Activated CD8-positive, alpha-beta T cell treated with anti-CD3 and anti-CD28 coated beads for 36 hours (primary cell): ENCODE measurements at regions of chr12 and their contacts with region 1.

Region 1: DNA sequence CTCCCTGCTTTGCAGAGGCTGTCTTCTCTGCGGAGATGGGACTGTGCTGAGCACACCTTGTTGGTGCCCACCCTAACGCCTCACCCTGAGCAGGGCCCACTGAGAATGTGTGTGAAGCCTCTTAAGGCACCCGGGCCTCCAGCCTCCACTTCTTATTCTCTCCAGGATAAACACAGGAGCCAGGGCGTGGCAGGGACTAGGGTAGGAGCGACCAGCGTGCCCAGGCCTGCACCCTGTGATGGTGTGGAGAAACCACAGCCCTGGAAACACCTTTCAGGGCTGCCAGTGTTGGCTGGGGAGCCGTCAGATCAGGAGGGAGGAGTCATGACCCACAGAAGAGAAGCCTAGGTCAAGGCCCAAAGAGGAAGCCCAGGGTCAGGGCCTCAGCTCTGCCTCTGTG is 41.3 kb downstream of the VDR start:
- DNase-seq: no peak
- ATAC-seq: no peak
- H3K4me3 Mint-ChIP-seq: no peak overlapping the region
- H3K27ac Mint-ChIP-seq: peak overlapping the region; percentile 25
- H3K4me1 Mint-ChIP-seq: peaks cover 72% of the 10 kb centered on the region
- H3K27me3 Mint-ChIP-seq: no peaks in the 10 kb centered on the region
- CTCF ChIP-seq: no peak

Region 2: GRCh38 chr12:47825239-47825639 is 38.2 kb before region 1 on chr12:
- CTCF ChIA-PET with region 1: no interaction called
- POLR2A ChIA-PET with region 1: no interaction called
- intact Hi-C with region 1: no loop called
- DNase-seq: no peak
- ATAC-seq: no peak
- H3K4me3 Mint-ChIP-seq: no peak overlapping the region
- H3K27ac Mint-ChIP-seq: peak overlapping the region; percentile 92
- H3K4me1 Mint-ChIP-seq: peaks cover 87% of the 10 kb centered on the region
- H3K27me3 Mint-ChIP-seq: no peaks in the 10 kb centered on the region
- CTCF ChIP-seq: no peak

Region 3: GRCh38 chr12:47904713-47905310 is 41.3 kb after region 1 on chr12 and contains the start of gene VDR:
- CTCF ChIA-PET with region 1: interaction called, 13 read pairs
- POLR2A ChIA-PET with region 1: interaction called, 11 read pairs
- intact Hi-C with region 1: no loop called
- DNase-seq: peak; percentile 81
- ATAC-seq: peak; percentile 82
- H3K4me3 Mint-ChIP-seq: peak within 1 kb of the TSS; percentile 95
- H3K27ac Mint-ChIP-seq: peak within 1 kb of the TSS; percentile 94
- H3K4me1 Mint-ChIP-seq: peaks cover 45% of the 10 kb centered on the region
- H3K27me3 Mint-ChIP-seq: peaks cover 20% of the 10 kb centered on the region
- CTCF ChIP-seq: peak; percentile 31
- total RNA-seq, gene VDR: 84.6 to 86.4 TPM